AG04450 (cell line): ENCODE measurements at regions of chr6 and their contacts with region 1.

Region 1: GRCh38 chr6:113994918-113995342 is 24.0 kb upstream of the HDAC2 start:
- DNase-seq: peak; percentile 80
- H3K4me3 ChIP-seq: no peak overlapping the region
- H3K27ac ChIP-seq: peak overlapping the region; percentile 63
- H3K27me3 ChIP-seq: no peaks in the 10 kb centered on the region
- CTCF ChIP-seq: peak; percentile 88

Region 2: GRCh38 chr6:113328886-113329381 is 666.0 kb before region 1 on chr6:
- CTCF ChIA-PET with region 1: no interaction called
- POLR2A ChIA-PET with region 1: no interaction called
- DNase-seq: peak; percentile 80
- H3K4me3 ChIP-seq: no peak overlapping the region
- H3K27ac ChIP-seq: no peak overlapping the region
- H3K27me3 ChIP-seq: no peaks in the 10 kb centered on the region
- CTCF ChIP-seq: no peak

Region 3: DNA sequence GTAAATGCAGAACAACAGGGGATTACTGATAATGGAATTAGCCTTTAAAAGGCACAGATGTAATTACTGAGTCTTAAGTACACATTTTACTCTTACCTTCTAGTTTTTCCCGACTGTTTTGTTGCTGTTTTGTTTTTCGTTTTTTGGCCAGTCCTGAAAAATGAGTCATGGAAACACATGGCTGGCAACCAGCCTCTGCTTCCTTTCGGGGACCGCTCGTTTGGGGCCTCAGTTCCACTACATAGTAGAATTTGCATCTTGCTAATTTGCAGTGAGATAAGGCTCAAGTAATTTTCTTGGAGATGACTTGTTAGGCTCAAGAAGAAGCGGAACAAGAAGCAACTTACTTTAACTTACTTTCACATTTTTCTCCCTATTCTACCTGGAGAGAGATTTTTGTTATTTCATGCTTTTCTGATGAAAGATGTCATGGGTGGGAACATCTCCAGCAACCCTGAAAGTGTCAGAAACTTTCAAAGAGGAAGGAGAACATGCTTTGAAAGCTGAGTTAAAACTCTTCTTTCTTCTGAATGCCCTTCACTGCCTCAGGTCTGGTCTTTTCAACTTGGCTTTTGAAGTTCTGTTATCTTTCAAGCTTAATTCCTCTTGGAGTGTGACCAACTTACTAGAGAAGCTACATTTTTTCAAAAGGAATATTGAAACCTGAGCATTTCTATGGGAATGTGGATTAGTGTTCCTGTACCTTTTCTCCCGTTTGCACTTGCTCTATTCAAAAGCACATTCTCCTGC is 47.5 kb after region 1 on chr6:
- CTCF ChIA-PET with region 1: interaction called, 11 read pairs
- POLR2A ChIA-PET with region 1: no interaction called
- DNase-seq: no peak
- H3K4me3 ChIP-seq: no peak overlapping the region
- H3K27ac ChIP-seq: no peak overlapping the region
- H3K27me3 ChIP-seq: no peaks in the 10 kb centered on the region
- CTCF ChIP-seq: no peak

Region 4: GRCh38 chr6:114061116-114061515 is 66.2 kb after region 1 on chr6:
- CTCF ChIA-PET with region 1: interaction called, 12 read pairs
- POLR2A ChIA-PET with region 1: no interaction called
- DNase-seq: no peak
- H3K4me3 ChIP-seq: no peak overlapping the region
- H3K27ac ChIP-seq: no peak overlapping the region
- H3K27me3 ChIP-seq: peaks cover 4% of the 10 kb centered on the region
- CTCF ChIP-seq: no peak

Region 5: DNA sequence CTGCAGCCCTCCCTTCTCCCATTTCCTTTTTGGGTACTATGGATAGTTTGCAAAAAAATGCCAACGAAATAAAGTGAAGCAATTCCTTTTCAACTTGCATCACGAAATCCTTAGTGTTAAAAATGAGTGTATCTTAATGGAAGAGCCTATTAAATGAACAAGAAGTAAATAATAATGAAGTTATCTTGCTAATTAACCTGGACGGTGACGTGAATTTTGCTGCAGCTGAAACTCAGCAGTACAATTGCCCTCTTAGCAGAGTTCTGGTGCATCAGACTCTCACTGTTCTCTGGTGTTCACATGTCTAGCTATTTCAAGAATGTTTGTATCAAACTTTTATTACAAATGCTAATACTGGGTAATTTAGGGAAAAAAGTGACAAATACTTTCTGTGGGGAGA is 95.7 kb after region 1 on chr6:
- CTCF ChIA-PET with region 1: interaction called, 14 read pairs
- POLR2A ChIA-PET with region 1: no interaction called
- DNase-seq: no peak
- H3K4me3 ChIP-seq: no peak overlapping the region
- H3K27ac ChIP-seq: no peak overlapping the region
- H3K27me3 ChIP-seq: no peaks in the 10 kb centered on the region
- CTCF ChIP-seq: no peak

Region 6: GRCh38 chr6:114096561-114097172 is 101.7 kb after region 1 on chr6:
- CTCF ChIA-PET with region 1: interaction called, 232 read pairs
- POLR2A ChIA-PET with region 1: no interaction called
- DNase-seq: no peak
- H3K4me3 ChIP-seq: no peak overlapping the region
- H3K27ac ChIP-seq: no peak overlapping the region
- H3K27me3 ChIP-seq: no peaks in the 10 kb centered on the region
- CTCF ChIP-seq: peak; percentile 79

Region 7: DNA sequence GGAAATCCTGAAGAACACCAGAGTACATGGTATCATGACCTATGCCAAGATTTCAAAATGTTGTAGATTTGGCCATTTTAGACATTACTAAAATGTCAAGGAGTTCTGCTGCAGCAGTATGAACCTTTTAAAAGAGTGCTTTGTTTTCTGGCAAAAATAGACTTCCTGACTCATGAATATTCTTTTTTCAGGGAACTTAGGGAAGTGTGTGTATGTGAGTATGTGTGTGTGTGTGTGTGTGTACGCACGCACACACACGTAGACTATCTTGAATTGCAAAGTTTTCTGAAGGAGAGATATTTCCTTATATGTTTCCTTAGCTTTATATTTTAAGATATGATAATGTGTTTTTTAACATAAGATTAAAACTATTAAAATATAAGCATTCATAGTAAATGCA is 186.7 kb after region 1 on chr6:
- CTCF ChIA-PET with region 1: no interaction called
- POLR2A ChIA-PET with region 1: no interaction called
- DNase-seq: no peak
- H3K4me3 ChIP-seq: no peak overlapping the region
- H3K27ac ChIP-seq: no peak overlapping the region
- H3K27me3 ChIP-seq: no peaks in the 10 kb centered on the region
- CTCF ChIP-seq: no peak

Region 8: GRCh38 chr6:114267897-114268296 is 273.0 kb after region 1 on chr6:
- CTCF ChIA-PET with region 1: no interaction called
- POLR2A ChIA-PET with region 1: no interaction called
- DNase-seq: no peak
- H3K4me3 ChIP-seq: no peak overlapping the region
- H3K27ac ChIP-seq: no peak overlapping the region
- H3K27me3 ChIP-seq: no peaks in the 10 kb centered on the region
- CTCF ChIP-seq: no peak

Region 9: DNA sequence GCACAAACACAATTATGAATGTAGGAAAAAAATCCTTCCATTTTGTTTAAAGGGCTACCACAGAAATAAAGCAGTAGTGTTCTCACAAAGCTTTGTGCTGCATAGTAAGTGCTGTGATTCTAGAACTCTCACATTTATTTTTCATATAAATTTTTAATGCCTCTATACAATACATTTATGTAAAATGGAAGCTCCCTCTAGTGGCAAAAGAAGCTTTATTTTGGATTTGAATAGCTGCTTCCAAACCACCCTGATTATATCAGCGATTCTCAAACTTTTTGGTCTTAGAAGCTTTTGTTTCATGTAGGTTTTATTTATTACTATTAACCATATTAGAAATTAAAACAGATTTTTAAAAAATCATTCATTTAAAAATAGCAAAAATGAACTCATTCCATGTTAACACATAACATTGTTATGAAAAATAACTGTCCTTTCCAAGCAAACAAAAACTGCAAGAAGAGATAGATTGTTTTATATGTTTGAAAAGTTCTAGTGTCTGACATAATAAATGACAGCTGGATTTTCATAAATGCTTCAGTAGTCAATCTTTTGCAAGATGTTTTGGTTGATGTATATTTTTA is 309.5 kb after region 1 on chr6:
- CTCF ChIA-PET with region 1: interaction called, 91 read pairs
- POLR2A ChIA-PET with region 1: no interaction called
- DNase-seq: peak; percentile 7
- H3K4me3 ChIP-seq: no peak overlapping the region
- H3K27ac ChIP-seq: no peak overlapping the region
- H3K27me3 ChIP-seq: no peaks in the 10 kb centered on the region
- CTCF ChIP-seq: peak; percentile 61